Activated T-helper 2 cell treated with anti-CD3 and anti-CD28 coated beads, Interferon-gamma antibody, Interleukin-2, Interleukin-4, amounts not matched to agents 10 μg/mL and 5 μg/mL and 100 μg/mL, durations not matched to agents 14 hours and 24 hours and 36 hours (primary cell): ENCODE measurements at regions of chr16 and their contacts with region 1.

Region 1: DNA sequence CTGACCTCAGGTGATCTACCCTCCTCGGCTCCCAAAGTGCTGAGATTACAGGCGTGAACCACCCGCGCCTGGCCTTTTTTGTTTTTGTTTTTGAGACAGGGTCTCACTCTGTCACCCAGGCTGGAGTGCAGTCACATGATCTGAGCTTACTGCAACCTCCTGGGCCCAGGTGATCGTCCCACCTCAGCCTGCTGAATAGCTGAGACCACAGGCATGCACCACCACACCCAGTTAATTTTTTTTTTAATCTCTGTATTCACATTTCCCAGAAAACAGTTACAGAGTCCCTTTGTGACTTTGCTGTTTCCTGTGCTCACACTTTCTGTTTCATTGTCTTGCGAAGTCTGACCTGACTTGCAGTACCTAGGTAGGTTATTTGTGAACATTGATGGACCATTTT is 2.7 kb downstream of the CLUAP1 start:
- DNase-seq: peak; percentile 69
- H3K4me3 Mint-ChIP-seq: peak overlapping the region; percentile 69
- H3K27ac Mint-ChIP-seq: peak overlapping the region; percentile 93
- H3K4me1 Mint-ChIP-seq: peaks cover 57% of the 10 kb centered on the region
- H3K27me3 Mint-ChIP-seq: no peaks in the 10 kb centered on the region

Region 2: GRCh38 chr16:3173892-3174617 is 329.5 kb before region 1 on chr16:
- intact Hi-C with region 1: loop called (anchors 5 kb)
- DNase-seq: no peak
- H3K4me3 Mint-ChIP-seq: peak overlapping the region; percentile 67
- H3K27ac Mint-ChIP-seq: no peak overlapping the region
- H3K4me1 Mint-ChIP-seq: peaks cover 27% of the 10 kb centered on the region
- H3K27me3 Mint-ChIP-seq: peaks cover 76% of the 10 kb centered on the region

Region 3: GRCh38 chr16:3264137-3265036 is 239.1 kb before region 1 on chr16:
- intact Hi-C with region 1: loop called (anchors 5 kb)
- DNase-seq: peak; percentile 97
- H3K4me3 Mint-ChIP-seq: peak overlapping the region; percentile 89
- H3K27ac Mint-ChIP-seq: peak overlapping the region; percentile 88
- H3K4me1 Mint-ChIP-seq: peaks cover 8% of the 10 kb centered on the region
- H3K27me3 Mint-ChIP-seq: no peaks in the 10 kb centered on the region

Region 4: GRCh38 chr16:3400779-3401688 is 102.5 kb before region 1 on chr16 and contains the starts of genes ZNF174 and ZSCAN32:
- intact Hi-C with region 1: loop called (anchors 2 kb)
- DNase-seq: peak; percentile 99
- H3K4me3 Mint-ChIP-seq: peak within 1 kb of the TSS; percentile 91
- H3K27ac Mint-ChIP-seq: peak within 1 kb of the TSS; percentile 76
- H3K4me1 Mint-ChIP-seq: peaks cover 18% of the 10 kb centered on the region
- H3K27me3 Mint-ChIP-seq: no peaks in the 10 kb centered on the region
- total RNA-seq, gene ZNF174: 9.2 and 11.1 TPM in 2 replicates
- total RNA-seq, gene ZSCAN32: 13.2 and 16.1 TPM in 2 replicates

Region 5: DNA sequence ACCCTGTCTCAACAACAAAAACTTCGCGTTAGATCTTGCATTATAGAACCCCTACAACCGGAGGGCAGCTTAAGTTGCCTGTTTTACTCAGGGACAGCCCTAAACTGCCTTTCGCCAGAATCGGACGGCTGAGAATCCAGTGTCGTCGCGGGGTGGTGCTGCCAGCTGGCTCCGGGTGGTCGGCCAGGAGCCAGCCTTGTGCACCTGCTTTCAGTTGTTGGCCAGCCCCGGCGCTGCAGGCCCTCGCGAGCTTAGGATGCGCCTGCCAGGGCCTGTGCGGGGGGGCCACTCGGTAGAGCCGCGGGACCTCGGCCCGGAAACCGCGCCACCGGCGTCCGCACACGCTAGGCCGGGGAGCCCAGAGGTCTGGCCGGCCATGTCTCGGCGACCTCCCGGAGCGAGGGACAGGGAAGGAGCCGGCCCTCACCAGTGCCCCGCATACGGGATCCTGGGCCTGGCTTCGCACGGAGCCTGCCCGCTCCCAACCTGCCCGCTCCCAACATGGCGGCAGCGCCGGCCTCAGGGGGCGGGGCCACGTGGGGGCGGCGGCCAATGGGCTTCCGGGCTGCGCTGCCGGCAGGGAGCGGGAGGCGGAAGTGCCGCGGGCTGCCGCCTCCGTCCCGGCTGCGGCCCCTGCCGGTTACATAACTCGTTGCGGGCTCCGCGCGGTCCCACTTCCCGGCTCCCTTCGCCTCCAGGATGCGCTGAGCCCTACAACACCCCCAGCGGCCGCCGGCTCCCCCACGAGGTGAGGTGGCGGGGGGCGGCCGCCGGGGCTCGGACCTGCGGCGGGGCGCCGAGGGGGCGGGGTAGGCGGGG is 45.9 kb before region 1 on chr16:
- intact Hi-C with region 1: loop called (anchors 2 kb)
- DNase-seq: peak; percentile 86
- H3K4me3 Mint-ChIP-seq: peak overlapping the region; percentile 80
- H3K27ac Mint-ChIP-seq: peak overlapping the region; percentile 70
- H3K4me1 Mint-ChIP-seq: peaks cover 35% of the 10 kb centered on the region
- H3K27me3 Mint-ChIP-seq: no peaks in the 10 kb centered on the region

Region 6: DNA sequence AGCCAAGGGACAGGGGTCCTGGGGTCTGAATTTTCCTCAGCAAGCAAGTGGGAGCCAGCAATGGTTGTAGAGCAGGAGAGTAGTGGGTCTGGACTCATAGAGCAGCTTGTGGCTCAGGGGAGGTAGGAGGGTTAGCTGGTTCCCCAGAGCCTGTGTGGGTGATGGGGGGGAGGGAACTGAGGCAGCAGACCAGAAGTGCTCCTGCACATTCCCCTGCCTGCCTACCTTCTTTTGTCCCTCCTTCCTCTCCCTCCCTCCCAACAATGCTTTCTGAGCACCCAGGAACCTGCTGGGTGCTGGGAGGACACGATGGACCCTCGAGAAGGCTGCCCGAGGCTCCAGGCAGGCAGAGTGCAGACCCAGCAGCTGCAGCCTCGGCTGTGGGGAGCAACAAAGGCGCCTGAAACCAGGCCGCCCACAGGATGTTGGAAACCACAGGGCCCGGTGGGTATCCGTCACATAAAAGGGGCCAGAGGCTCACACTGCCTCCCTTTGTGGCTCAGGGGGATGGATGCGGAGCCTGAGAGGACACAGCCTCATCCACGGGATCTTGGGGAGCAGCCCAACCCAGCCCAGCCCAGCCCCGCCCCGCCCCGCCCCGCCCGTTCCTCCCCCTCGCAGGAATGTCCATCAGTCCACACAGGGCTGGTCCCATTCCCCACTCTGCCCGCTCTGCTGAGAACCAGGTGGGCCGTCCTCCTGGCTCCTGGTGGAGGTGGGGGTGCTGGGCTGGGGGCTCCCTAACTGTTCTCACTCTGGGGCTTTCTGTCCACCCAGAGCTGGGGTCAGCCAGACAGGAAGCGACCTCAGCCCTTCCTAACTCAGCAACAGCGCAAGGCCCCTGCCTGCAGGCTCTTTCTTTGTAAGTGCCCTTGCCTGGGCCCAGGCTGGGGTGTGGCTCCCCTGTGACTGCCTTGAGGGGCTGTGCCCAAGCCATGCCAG is 75.4 kb after region 1 on chr16:
- intact Hi-C with region 1: loop called (anchors 2 kb)
- DNase-seq: peak; percentile 67
- H3K4me3 Mint-ChIP-seq: peak overlapping the region; percentile 91
- H3K27ac Mint-ChIP-seq: peak overlapping the region; percentile 96
- H3K4me1 Mint-ChIP-seq: peaks cover 38% of the 10 kb centered on the region
- H3K27me3 Mint-ChIP-seq: no peaks in the 10 kb centered on the region

Region 7: GRCh38 chr16:4271176-4272066 is 767.9 kb after region 1 on chr16:
- intact Hi-C with region 1: loop called (anchors 5 kb)
- DNase-seq: peak; percentile 87
- H3K4me3 Mint-ChIP-seq: peak overlapping the region; percentile 83
- H3K27ac Mint-ChIP-seq: peak overlapping the region; percentile 90
- H3K4me1 Mint-ChIP-seq: peaks cover 6% of the 10 kb centered on the region
- H3K27me3 Mint-ChIP-seq: no peaks in the 10 kb centered on the region